Naive thymus-derived CD4-positive, alpha-beta T cell (primary cell): ENCODE measurements at regions of chr15 and their contacts with region 1.

Region 1: GRCh38 chr15:56732921-56733797 is at the start of gene ZNF280D:
- DNase-seq: peak; percentile 58 to 82 (median 76)
- ATAC-seq: peak; percentile 91
- H3K4me3 ChIP-seq: peak within 1 kb of the TSS; percentile 86
- H3K4me3 Mint-ChIP-seq: peak within 1 kb of the TSS; percentile 92 to 99 (median 94)
- H3K27ac ChIP-seq: peak within 1 kb of the TSS; percentile 80
- H3K27ac Mint-ChIP-seq: peak within 1 kb of the TSS; percentile 90 to 98 (median 95)
- H3K4me1 ChIP-seq: peaks cover 23 to 25% of the 10 kb centered on the region in 2 donors
- H3K4me1 Mint-ChIP-seq: peaks cover 25 to 45% (median 35%) of the 10 kb centered on the region in 7 donors
- H3K27me3 ChIP-seq: no peaks in the 10 kb centered on the region
- H3K27me3 Mint-ChIP-seq: peaks cover 0 to 2% (median 0%) of the 10 kb centered on the region in 5 donors
- total RNA-seq, gene ZNF280D: 36.9 to 59.0 (median 41.1) TPM

Region 2: GRCh38 chr15:56371495-56372147 is 361.5 kb before region 1 on chr15:
- CTCF ChIA-PET with region 1: no interaction called
- POLR2A ChIA-PET with region 1: no interaction called
- intact Hi-C with region 1: no loop called
- DNase-seq: no peak
- ATAC-seq: no peak
- H3K4me3 ChIP-seq: no peak overlapping the region
- H3K4me3 Mint-ChIP-seq: no peak overlapping the region
- H3K27ac ChIP-seq: no peak overlapping the region
- H3K27ac Mint-ChIP-seq: no peak overlapping the region
- H3K4me1 ChIP-seq: no peaks in the 10 kb centered on the region
- H3K4me1 Mint-ChIP-seq: peaks cover 0 to 4% (median 0%) of the 10 kb centered on the region in 7 donors
- H3K27me3 ChIP-seq: no peaks in the 10 kb centered on the region
- H3K27me3 Mint-ChIP-seq: peaks cover 24 to 65% (median 41%) of the 10 kb centered on the region in 5 donors

Region 3: GRCh38 chr15:56464893-56465520 is 268.2 kb before region 1 on chr15 and contains the start of gene MNS1:
- CTCF ChIA-PET with region 1: no interaction called
- POLR2A ChIA-PET with region 1: interaction called, 11 read pairs
- intact Hi-C with region 1: loop called in 1 of 2 experiments (anchors 1 kb)
- DNase-seq: peak; percentile 41 to 75 (median 50)
- ATAC-seq: peak; percentile 97
- H3K4me3 ChIP-seq: peak within 1 kb of the TSS; percentile 44
- H3K4me3 Mint-ChIP-seq: peak within 1 kb of the TSS; percentile 65 to 96 (median 86)
- H3K27ac ChIP-seq: no peak within 1 kb of the TSS
- H3K27ac Mint-ChIP-seq: peak within 1 kb of the TSS in 2 of 9 donors; percentile 75 to 87
- H3K4me1 ChIP-seq: peaks cover 0 to 5% of the 10 kb centered on the region in 2 donors
- H3K4me1 Mint-ChIP-seq: peaks cover 12 to 36% (median 27%) of the 10 kb centered on the region in 7 donors
- H3K27me3 ChIP-seq: no peaks in the 10 kb centered on the region
- H3K27me3 Mint-ChIP-seq: peaks cover 15 to 39% (median 22%) of the 10 kb centered on the region in 5 donors
- total RNA-seq, gene MNS1: 0.24 to 0.53 TPM in 2 of 5 experiments, not detected in the others

Region 4: GRCh38 chr15:56699743-56700142 is 33.4 kb before region 1 on chr15:
- CTCF ChIA-PET with region 1: no interaction called
- POLR2A ChIA-PET with region 1: no interaction called
- intact Hi-C with region 1: loop called in 1 of 2 experiments (anchors 5 kb)
- DNase-seq: no peak
- ATAC-seq: no peak
- H3K4me3 ChIP-seq: no peak overlapping the region
- H3K4me3 Mint-ChIP-seq: no peak overlapping the region
- H3K27ac ChIP-seq: no peak overlapping the region
- H3K27ac Mint-ChIP-seq: no peak overlapping the region
- H3K4me1 ChIP-seq: no peaks in the 10 kb centered on the region
- H3K4me1 Mint-ChIP-seq: peaks cover 0 to 11% (median 0%) of the 10 kb centered on the region in 7 donors
- H3K27me3 ChIP-seq: no peaks in the 10 kb centered on the region
- H3K27me3 Mint-ChIP-seq: no peaks in the 10 kb centered on the region

Region 5: GRCh38 chr15:56765251-56765650 is 32.1 kb after region 1 on chr15:
- CTCF ChIA-PET with region 1: no interaction called
- POLR2A ChIA-PET with region 1: no interaction called
- intact Hi-C with region 1: loop called in 1 of 2 experiments (anchors 1 kb)
- DNase-seq: no peak
- ATAC-seq: no peak
- H3K4me3 ChIP-seq: no peak overlapping the region
- H3K4me3 Mint-ChIP-seq: peak overlapping the region in 1 of 10 donors; percentile 60
- H3K27ac ChIP-seq: no peak overlapping the region
- H3K27ac Mint-ChIP-seq: peak overlapping the region in 1 of 9 donors; percentile 80
- H3K4me1 ChIP-seq: no peaks in the 10 kb centered on the region
- H3K4me1 Mint-ChIP-seq: peaks cover 0 to 46% (median 6%) of the 10 kb centered on the region in 7 donors
- H3K27me3 ChIP-seq: no peaks in the 10 kb centered on the region
- H3K27me3 Mint-ChIP-seq: peaks cover 0 to 4% (median 0%) of the 10 kb centered on the region in 5 donors

Region 6: DNA sequence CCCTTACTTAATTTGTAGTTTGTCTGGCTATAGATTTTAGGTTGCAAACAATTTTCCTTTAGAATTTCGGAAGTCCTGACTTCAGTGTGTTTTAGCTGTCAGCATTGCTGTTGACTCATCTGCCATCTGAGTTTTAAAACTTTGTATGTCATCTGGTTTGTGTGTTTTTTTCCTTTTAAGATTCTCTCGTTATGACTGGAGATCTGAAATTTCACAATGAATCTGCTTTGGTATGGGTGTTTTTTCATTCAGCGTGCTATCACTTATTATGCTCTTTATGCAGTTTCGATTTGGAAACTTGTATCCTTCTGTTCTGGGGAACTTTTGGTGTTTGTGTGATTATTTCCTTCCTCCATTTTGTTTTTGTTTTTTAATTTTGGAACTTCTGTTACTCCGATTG is 53.8 kb after region 1 on chr15:
- CTCF ChIA-PET with region 1: no interaction called
- POLR2A ChIA-PET with region 1: no interaction called
- intact Hi-C with region 1: loop called in 1 of 2 experiments (anchors 5 kb)
- DNase-seq: no peak
- ATAC-seq: no peak
- H3K4me3 ChIP-seq: no peak overlapping the region
- H3K4me3 Mint-ChIP-seq: peak overlapping the region in 1 of 10 donors; percentile 55
- H3K27ac ChIP-seq: no peak overlapping the region
- H3K27ac Mint-ChIP-seq: peak overlapping the region in 1 of 9 donors; percentile 76
- H3K4me1 ChIP-seq: no peaks in the 10 kb centered on the region
- H3K4me1 Mint-ChIP-seq: peaks cover 0 to 10% (median 0%) of the 10 kb centered on the region in 7 donors
- H3K27me3 ChIP-seq: no peaks in the 10 kb centered on the region
- H3K27me3 Mint-ChIP-seq: peaks cover 0 to 7% (median 0%) of the 10 kb centered on the region in 5 donors

Region 7: GRCh38 chr15:56886932-56887781 is 154.0 kb after region 1 on chr15:
- CTCF ChIA-PET with region 1: no interaction called
- POLR2A ChIA-PET with region 1: interaction called, 3 read pairs
- intact Hi-C with region 1: loop called (anchors 1 kb)
- DNase-seq: peak; percentile 74 to 86 (median 80)
- ATAC-seq: peak; percentile 91
- H3K4me3 ChIP-seq: peak overlapping the region; percentile 80
- H3K4me3 Mint-ChIP-seq: peak overlapping the region; percentile 82 to 96 (median 88)
- H3K27ac ChIP-seq: peak overlapping the region; percentile 86
- H3K27ac Mint-ChIP-seq: peak overlapping the region; percentile 80 to 98 (median 93)
- H3K4me1 ChIP-seq: peaks cover 9 to 12% of the 10 kb centered on the region in 2 donors
- H3K4me1 Mint-ChIP-seq: peaks cover 17 to 35% (median 26%) of the 10 kb centered on the region in 7 donors
- H3K27me3 ChIP-seq: no peaks in the 10 kb centered on the region
- H3K27me3 Mint-ChIP-seq: peaks cover 0 to 8% (median 0%) of the 10 kb centered on the region in 5 donors

Region 8: DNA sequence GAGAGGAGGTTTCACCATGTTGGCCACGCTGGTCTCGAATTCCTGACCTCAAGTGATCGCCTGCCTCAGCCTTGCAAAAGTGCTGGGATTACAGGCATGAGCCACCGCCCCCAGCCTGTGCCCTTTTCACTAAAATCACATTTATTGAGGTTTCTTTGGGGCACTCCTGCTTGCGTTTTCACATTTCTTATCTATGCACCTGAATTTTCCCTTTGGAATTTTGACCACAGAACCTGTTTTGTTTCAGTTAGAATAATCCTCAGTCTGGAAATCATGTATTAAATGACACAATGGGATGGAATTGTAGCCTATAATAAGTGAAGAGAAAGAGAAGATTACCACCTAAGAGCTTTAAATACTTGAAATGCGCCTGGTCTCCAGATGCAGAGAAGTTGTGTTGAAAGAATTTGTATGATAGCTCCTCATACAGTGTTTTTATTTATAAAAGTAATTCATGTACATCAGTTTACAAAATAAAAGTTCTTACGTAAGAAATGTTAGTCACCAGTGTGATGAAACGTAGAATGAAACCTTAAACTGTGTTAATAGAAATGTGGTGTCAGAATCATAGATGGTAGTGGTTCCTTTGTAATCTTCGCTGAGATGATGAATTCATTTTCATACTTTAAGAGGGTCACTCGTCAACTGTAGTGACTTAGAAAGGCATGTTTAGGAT is 292.2 kb after region 1 on chr15:
- CTCF ChIA-PET with region 1: no interaction called
- POLR2A ChIA-PET with region 1: no interaction called
- intact Hi-C with region 1: no loop called
- DNase-seq: no peak
- ATAC-seq: no peak
- H3K4me3 ChIP-seq: no peak overlapping the region
- H3K4me3 Mint-ChIP-seq: no peak overlapping the region
- H3K27ac ChIP-seq: no peak overlapping the region
- H3K27ac Mint-ChIP-seq: peak overlapping the region in 1 of 9 donors; percentile 35
- H3K4me1 ChIP-seq: peaks cover 0 to 7% of the 10 kb centered on the region in 2 donors
- H3K4me1 Mint-ChIP-seq: peaks cover 14 to 73% (median 60%) of the 10 kb centered on the region in 7 donors
- H3K27me3 ChIP-seq: no peaks in the 10 kb centered on the region
- H3K27me3 Mint-ChIP-seq: no peaks in the 10 kb centered on the region

Region 9: GRCh38 chr15:57706405-57707209 is 973.4 kb after region 1 on chr15 and contains the start of gene POLR2M:
- CTCF ChIA-PET with region 1: no interaction called
- POLR2A ChIA-PET with region 1: interaction called, 5 read pairs
- intact Hi-C with region 1: loop called (anchors 5 to 10 kb)
- DNase-seq: peak; percentile 67 to 97 (median 91)
- ATAC-seq: peak; percentile 94
- H3K4me3 ChIP-seq: peak within 1 kb of the TSS; percentile 88
- H3K4me3 Mint-ChIP-seq: peak within 1 kb of the TSS; percentile 83 to 93 (median 89)
- H3K27ac ChIP-seq: peak within 1 kb of the TSS; percentile 92
- H3K27ac Mint-ChIP-seq: peak within 1 kb of the TSS; percentile 63 to 99 (median 97)
- H3K4me1 ChIP-seq: peaks cover 17 to 38% of the 10 kb centered on the region in 2 donors
- H3K4me1 Mint-ChIP-seq: peaks cover 51 to 96% (median 94%) of the 10 kb centered on the region in 7 donors
- H3K27me3 ChIP-seq: no peaks in the 10 kb centered on the region
- H3K27me3 Mint-ChIP-seq: peaks cover 0 to 3% (median 0%) of the 10 kb centered on the region in 5 donors
- total RNA-seq, gene POLR2M: 67.0 to 105 (median 82.9) TPM